Right ventricle myocardium inferior (tissue), 1 donor: ENCODE measurements at regions of chr3 and their contacts with region 1.

Region 1: DNA sequence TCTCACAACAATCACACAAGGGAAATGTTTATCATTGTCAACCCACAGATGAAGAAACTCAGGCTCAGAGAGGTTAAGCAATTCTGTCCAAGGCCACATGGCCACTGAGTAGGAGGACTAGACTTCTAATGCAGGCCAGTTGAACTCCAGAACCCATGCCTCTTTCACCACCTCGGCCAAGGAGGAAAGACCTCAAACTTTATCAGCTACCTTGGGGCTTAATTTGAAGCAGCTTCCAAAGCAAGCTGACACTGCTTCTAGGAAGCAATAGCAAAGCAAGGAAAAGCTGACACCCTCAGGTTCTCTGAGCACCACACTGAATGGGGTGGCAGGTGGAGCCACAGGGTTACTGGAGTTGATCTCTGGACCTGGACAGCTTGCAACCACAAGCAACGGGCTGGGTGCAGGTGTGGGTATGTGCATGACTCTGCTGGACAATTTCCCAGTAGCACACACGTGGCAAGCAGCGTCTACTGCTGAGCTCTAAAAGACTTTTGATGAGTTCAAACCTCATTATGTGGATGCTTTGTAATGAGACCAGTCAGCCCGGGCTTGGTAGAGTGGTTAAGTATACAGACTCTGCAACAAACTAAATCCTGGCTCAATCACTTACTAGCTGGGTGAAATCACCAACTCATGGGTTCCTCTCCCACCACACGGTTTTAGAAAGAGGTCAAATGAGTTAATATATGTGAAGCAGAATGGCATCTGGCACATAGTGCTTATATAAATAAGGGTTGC is 23.1 kb downstream of the CCNL1 start:
- DNase-seq: no peak
- ATAC-seq: peak; percentile 40

Region 2: DNA sequence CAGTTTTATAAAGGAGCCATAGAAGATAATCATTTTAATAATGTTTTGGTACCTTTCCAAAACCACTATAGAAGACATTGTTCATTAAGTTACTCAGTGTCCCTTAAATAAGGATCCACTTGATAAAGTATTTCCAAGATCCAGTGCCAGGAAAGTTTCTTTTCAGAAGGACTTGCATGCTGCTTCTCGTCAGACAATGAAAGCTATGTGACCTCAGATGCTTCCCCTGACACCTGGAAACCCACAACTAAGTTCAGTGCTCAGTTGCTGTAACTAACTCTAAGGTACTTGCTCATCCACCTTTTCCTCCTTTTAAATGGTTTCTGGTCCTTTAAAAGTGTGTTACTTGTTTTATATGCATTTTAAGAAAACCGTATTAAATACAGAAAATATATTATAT is 589.2 kb before region 1 on chr3:
- intact Hi-C with region 1: loop called (anchors 5 kb)
- DNase-seq: no peak
- ATAC-seq: peak; percentile 56

Region 3: DNA sequence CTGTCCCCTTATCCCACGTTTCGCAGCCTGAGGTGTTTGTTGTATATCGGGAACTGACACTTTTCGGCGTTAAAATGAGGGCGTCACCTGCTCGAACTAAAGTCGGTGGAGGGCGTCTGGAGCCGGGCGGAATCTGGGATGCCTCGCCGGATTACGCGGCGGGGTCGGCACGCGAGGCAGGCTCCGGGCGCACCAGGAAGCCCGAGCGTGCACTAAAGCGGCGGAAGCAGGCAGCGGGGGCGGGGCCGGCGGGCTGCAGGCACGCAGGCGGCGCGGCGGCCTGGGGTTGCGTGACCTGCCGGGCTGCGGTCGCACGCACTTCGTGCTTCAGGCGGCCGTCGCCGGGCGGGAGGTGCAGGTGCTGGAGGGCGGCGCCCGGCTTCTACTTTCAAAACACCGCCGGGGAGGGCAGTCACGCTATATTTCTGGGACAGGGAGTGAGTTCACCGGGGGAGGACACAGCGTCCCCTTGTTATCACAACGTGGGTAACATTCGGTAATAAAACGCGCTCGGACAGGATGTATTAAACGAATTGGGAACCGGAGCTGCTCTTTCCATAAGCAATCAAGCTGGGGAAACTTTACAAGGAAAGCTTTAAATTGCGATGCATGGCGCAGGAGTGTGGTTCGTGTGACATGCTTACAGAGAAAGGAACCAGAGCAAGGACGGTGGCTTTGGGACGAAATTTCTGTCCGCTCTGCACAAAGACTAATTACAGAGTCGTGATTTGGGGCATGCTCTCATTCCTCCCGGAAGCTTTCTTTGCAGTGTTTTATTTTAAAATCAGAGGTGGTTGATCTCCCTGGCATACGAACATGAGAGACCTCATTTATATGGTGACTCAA is 319.8 kb before region 1 on chr3:
- intact Hi-C with region 1: loop called (anchors 2 kb)
- DNase-seq: peak; percentile 95
- ATAC-seq: peak; percentile 95

Region 4: DNA sequence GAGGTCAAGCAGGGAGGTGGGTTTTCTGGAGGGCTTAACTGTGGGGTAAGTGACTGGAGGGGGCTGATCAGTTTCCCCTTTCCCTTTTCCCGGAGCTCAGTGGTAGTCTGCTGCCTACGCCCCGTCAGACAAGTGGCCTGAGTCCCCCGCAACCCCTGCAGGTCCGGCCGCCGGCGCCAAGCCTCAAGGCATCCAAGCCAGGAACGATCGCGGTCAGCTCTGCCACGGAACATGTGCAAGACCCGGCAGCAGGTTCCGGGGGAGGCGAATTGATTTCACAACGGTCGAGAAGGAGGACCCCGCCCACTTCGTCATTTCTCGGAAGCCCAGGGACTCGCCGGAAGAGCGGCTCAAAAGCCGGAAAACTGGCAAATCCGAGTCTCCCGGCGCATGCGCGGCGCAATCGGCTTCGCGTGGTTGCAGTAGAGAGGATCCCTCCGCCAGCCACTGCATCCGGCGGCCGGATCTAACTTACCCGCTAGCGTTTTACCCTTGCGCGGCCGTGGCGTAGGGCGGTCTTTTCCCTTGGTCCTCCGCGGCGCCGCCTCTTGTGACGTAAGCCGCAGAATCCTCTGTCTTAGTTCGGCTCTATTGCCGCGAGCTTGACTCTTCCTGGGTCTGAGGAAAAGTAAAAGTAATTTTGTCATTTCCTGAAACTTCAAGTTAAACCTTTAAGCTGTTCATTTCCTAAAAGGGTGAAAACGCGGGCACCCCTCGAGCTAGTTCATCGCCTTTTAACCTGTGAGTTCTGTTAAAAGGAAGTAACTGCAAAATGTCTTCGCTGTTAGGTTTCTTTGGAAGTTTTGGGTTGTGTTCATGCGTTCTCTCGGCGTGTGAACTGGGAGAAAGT is 38.1 kb after region 1 on chr3:
- intact Hi-C with region 1: no loop called
- DNase-seq: peak; percentile 99
- ATAC-seq: peak; percentile 97

Region 5: GRCh38 chr3:157755233-157755632 is 618.4 kb after region 1 on chr3:
- intact Hi-C with region 1: no loop called
- DNase-seq: no peak
- ATAC-seq: no peak